Activated T-helper 2 cell treated with anti-CD3 and anti-CD28 coated beads, Interferon-gamma antibody, Interleukin-2, Interleukin-4, amounts not matched to agents 10 μg/mL and 5 μg/mL and 100 μg/mL, durations not matched to agents 14 hours and 24 hours and 36 hours (primary cell): ENCODE measurements at regions of chr3 and their contacts with region 1.

Region 1: GRCh38 chr3:136752422-136753325 is 496 bp upstream of the STAG1 start:
- DNase-seq: peak; percentile 99
- H3K4me3 Mint-ChIP-seq: peak overlapping the region; percentile 88
- H3K27ac Mint-ChIP-seq: peak overlapping the region; percentile 98
- H3K4me1 Mint-ChIP-seq: peaks cover 34% of the 10 kb centered on the region
- H3K27me3 Mint-ChIP-seq: no peaks in the 10 kb centered on the region

Region 2: DNA sequence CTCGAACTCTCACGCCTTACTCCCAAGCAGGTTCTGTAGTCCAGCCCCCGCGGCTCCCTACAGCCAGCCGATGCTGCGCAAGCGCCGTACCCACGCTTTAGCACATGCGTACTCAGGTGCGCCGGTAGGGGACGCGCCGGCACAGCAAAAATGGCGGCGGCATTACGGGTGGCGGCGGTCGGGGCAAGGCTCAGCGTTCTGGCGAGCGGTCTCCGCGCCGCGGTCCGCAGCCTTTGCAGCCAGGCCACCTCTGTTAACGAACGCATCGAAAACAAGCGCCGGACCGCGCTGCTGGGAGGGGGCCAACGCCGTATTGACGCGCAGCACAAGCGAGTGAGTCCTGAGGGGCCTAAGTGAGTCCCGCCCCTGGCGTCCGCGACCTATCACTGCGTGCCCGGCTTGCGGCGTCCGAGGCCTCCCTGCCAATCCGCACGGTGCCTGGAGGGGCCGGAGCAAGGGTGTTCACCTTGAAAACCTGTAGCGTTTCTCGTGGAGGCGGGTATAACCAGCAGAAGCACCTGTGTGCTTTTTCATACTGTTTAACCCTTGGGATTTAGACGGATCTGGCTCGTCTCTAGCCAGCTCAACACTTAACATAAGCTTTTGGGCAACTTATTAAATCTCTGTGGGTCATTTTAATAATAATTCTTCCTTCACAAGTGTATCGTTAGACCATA is 502.3 kb before region 1 on chr3 and contains the start of gene PCCB:
- intact Hi-C with region 1: loop called (anchors 1 kb)
- DNase-seq: peak; percentile 89
- H3K4me3 Mint-ChIP-seq: peak within 1 kb of the TSS; percentile 88
- H3K27ac Mint-ChIP-seq: peak within 1 kb of the TSS; percentile 90
- H3K4me1 Mint-ChIP-seq: peaks cover 17% of the 10 kb centered on the region
- H3K27me3 Mint-ChIP-seq: no peaks in the 10 kb centered on the region
- total RNA-seq, gene PCCB: 44.5 and 47.5 TPM in 2 replicates

Region 3: DNA sequence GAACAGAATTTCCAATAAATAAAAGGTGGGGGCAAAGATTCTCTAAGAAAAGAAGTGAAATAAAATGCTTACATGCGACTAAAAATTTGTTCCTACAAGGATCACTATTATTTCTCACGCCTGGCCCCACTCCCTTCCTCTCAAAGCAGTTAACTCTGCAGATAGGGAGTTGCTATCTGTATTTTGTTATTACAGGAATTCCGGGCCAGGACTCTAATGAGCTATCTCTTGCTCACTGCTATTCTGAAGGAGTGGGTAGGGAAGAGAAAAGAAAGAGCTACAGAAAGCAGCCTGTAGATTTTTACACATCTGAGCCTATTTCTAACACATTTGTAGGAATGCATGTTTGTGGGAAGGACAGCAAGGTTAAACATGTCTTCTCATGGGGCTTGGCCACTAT is 362.1 kb before region 1 on chr3:
- intact Hi-C with region 1: loop called (anchors 1 kb)
- DNase-seq: no peak
- H3K4me3 Mint-ChIP-seq: no peak overlapping the region
- H3K27ac Mint-ChIP-seq: no peak overlapping the region
- H3K4me1 Mint-ChIP-seq: no peaks in the 10 kb centered on the region
- H3K27me3 Mint-ChIP-seq: no peaks in the 10 kb centered on the region

Region 4: GRCh38 chr3:136694321-136694720 is 58.4 kb before region 1 on chr3:
- intact Hi-C with region 1: no loop called
- DNase-seq: no peak
- H3K4me3 Mint-ChIP-seq: no peak overlapping the region
- H3K27ac Mint-ChIP-seq: no peak overlapping the region
- H3K4me1 Mint-ChIP-seq: peaks cover 23% of the 10 kb centered on the region
- H3K27me3 Mint-ChIP-seq: no peaks in the 10 kb centered on the region

Region 5: GRCh38 chr3:136818769-136819391 is 66.2 kb after region 1 on chr3 and contains the start of gene SLC35G2:
- intact Hi-C with region 1: loop called (anchors 1 kb)
- DNase-seq: no peak
- H3K4me3 Mint-ChIP-seq: peak within 1 kb of the TSS; percentile 85
- H3K27ac Mint-ChIP-seq: peak within 1 kb of the TSS; percentile 83
- H3K4me1 Mint-ChIP-seq: peaks cover 23% of the 10 kb centered on the region
- H3K27me3 Mint-ChIP-seq: peaks cover 31% of the 10 kb centered on the region
- total RNA-seq, gene SLC35G2: 7.3 and 7.7 TPM in 2 replicates

Region 6: DNA sequence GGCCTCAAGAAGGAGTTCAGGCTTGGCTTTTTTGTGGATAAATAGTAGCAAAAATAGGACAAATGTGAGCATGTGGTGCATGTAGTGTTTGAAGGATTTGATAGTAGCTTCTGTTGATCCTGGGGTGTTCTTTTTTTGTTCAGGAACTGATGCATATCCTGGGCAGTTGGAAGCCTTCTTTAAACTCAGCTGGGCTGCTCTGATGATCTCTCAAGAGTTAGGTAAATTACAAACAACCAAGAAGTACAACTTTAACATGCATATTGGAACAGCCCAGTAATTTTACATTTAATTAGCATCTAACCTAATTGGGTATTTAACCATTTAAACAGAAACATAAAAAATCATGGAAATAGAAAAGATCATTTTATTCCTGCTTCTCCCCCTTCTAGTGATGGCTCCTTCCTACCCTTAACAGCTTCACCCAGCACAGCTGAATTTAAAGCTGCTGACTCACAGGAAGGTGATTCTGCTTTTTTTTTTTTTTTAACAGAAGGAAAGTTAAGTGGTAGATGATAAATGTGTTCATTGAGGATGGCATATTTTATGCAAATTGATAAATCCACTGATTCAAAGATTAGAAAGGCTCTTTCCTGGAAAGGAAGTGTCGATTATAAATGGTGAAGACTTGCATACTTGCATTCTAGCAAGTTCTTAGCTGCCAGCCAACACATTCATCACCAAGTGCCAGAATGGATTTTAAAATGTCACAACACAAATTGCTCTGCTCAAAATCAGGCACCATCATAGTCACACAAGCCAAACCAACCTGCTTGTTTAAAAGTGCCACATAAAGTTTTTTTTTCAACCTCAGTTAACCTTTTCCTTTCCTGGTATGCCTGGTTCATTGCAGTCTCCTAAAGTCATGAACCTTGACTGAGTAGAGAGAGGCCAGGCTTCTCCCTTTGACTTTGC is 86.2 kb after region 1 on chr3:
- intact Hi-C with region 1: no loop called
- DNase-seq: no peak
- H3K4me3 Mint-ChIP-seq: peak overlapping the region; percentile 10
- H3K27ac Mint-ChIP-seq: peak overlapping the region; percentile 58
- H3K4me1 Mint-ChIP-seq: peaks cover 41% of the 10 kb centered on the region
- H3K27me3 Mint-ChIP-seq: no peaks in the 10 kb centered on the region

Region 7: DNA sequence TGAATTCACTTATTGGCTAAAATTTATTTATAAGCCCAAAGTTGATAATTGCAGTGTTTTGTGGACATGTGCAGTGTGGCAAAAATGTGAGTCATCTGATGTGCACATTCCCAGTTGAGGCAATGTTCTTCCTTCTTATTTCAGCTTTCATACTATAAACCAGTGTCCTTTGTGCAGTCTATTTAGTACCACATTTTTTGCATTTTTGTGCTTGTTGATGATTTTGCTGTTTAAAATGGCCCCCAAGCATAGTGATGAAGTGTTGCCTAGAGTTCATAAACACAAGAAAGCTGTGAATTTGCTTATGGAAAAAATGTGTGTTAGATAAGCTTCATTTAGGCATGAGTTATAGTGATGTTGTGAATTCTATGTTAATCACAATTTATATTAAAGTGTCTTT is 185.7 kb after region 1 on chr3:
- intact Hi-C with region 1: loop called (anchors 5 kb)
- DNase-seq: no peak
- H3K4me3 Mint-ChIP-seq: no peak overlapping the region
- H3K27ac Mint-ChIP-seq: no peak overlapping the region
- H3K4me1 Mint-ChIP-seq: peaks cover 36% of the 10 kb centered on the region
- H3K27me3 Mint-ChIP-seq: no peaks in the 10 kb centered on the region